ENCODE measurements at regions of chr20 and their contacts with region 1.

Region 1: GRCh38 chr20:33666293-33667244 is at the start of gene ACTL10:
- DNase-seq: peak; percentile 78
- H3K4me3 Mint-ChIP-seq: peak within 1 kb of the TSS; percentile 88
- H3K27ac Mint-ChIP-seq: peak within 1 kb of the TSS; percentile 86
- H3K4me1 Mint-ChIP-seq: peaks cover 43% of the 10 kb centered on the region
- H3K27me3 Mint-ChIP-seq: no peaks in the 10 kb centered on the region
- total RNA-seq, gene ACTL10: 3.7 and 4.2 TPM in 2 replicates

Region 2: GRCh38 chr20:33373735-33374605 is 292.6 kb before region 1 on chr20:
- intact Hi-C with region 1: loop called (anchors 10 kb)
- DNase-seq: no peak
- H3K4me3 Mint-ChIP-seq: no peak overlapping the region
- H3K27ac Mint-ChIP-seq: no peak overlapping the region
- H3K4me1 Mint-ChIP-seq: peaks cover 52% of the 10 kb centered on the region
- H3K27me3 Mint-ChIP-seq: no peaks in the 10 kb centered on the region

Region 3: GRCh38 chr20:33443512-33444239 is 222.9 kb before region 1 on chr20 and contains the start of gene SNTA1:
- intact Hi-C with region 1: loop called (anchors 1 kb)
- DNase-seq: peak; percentile 82
- H3K4me3 Mint-ChIP-seq: peak within 1 kb of the TSS; percentile 88
- H3K27ac Mint-ChIP-seq: peak within 1 kb of the TSS; percentile 76
- H3K4me1 Mint-ChIP-seq: peaks cover 10% of the 10 kb centered on the region
- H3K27me3 Mint-ChIP-seq: peaks cover 11% of the 10 kb centered on the region
- total RNA-seq, gene SNTA1: 0.76 and 0.91 TPM in 2 replicates

Region 4: DNA sequence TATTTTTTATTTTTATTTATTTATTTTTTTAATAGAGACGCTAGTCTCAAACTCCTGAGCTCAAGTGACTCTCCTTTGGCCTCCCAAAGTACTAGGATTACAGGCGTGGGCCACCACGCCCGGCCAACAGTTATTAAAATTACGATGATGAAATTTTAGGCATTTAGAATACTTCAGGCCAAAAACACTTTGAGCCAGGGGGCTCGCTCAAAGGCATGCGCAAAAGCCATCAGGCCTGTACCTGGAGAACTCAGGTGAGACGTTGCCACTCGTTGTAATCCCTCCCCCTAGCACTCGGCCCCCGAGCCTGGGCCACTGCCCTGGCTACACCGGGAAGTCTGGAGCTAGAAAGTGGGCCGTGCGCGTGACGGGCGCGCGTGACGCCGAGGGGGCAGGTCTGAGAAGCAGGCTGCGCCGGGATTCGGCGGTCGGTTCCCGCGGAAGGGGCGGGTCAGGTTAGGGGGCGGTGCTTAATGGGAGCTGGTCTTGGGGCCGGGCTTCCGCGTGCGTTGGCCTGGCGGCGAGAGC is 177.0 kb before region 1 on chr20:
- intact Hi-C with region 1: loop called (anchors 1 kb)
- DNase-seq: peak; percentile 99
- H3K4me3 Mint-ChIP-seq: peak overlapping the region; percentile 88
- H3K27ac Mint-ChIP-seq: peak overlapping the region; percentile 85
- H3K4me1 Mint-ChIP-seq: peaks cover 9% of the 10 kb centered on the region
- H3K27me3 Mint-ChIP-seq: no peaks in the 10 kb centered on the region

Region 5: GRCh38 chr20:33653218-33653899 is 13.2 kb before region 1 on chr20:
- intact Hi-C with region 1: loop called (anchors 1 kb)
- DNase-seq: no peak
- H3K4me3 Mint-ChIP-seq: no peak overlapping the region
- H3K27ac Mint-ChIP-seq: no peak overlapping the region
- H3K4me1 Mint-ChIP-seq: peaks cover 15% of the 10 kb centered on the region
- H3K27me3 Mint-ChIP-seq: no peaks in the 10 kb centered on the region

Region 6: DNA sequence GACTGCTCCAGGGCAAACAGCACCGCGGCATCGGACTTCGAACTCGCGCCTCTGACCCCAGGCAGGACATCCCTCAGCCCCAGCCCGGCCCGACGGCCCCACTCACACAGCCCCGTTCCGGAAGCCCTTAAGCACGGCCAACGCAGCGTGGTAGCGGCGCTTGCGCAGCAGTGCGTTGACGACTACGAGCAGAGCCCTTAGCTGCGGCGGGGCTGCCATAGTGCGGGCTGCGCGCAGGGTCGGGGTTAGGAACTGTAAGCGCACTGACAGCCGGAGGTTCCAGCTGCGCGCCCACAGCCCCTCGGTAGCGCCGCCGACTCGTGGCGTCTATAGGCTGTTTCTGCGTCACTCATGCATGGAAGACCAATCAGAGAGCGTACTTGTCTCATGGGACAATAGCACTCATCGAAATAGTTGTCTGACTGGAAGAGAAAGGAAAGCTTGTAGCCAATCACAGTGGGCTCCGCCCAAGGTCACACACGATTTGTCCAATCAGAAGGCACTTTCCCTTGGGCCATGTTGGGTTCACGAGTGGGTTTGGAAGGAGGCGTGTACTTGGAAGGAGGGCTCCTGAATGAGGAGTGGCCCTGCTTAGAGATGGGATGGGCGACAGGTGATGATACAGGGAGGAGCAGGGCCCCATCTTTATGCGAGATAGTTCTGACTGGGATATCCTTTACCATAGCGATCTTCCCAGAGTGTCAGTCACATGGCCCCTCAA is 53.6 kb after region 1 on chr20 and contains the start of gene PXMP4:
- intact Hi-C with region 1: loop called (anchors 1 kb)
- DNase-seq: peak; percentile 88
- H3K4me3 Mint-ChIP-seq: peak within 1 kb of the TSS; percentile 85
- H3K27ac Mint-ChIP-seq: peak within 1 kb of the TSS; percentile 93
- H3K4me1 Mint-ChIP-seq: peaks cover 30% of the 10 kb centered on the region
- H3K27me3 Mint-ChIP-seq: no peaks in the 10 kb centered on the region
- total RNA-seq, gene PXMP4: 7.3 and 7.9 TPM in 2 replicates

Region 7: GRCh38 chr20:33810885-33811777 is 144.6 kb after region 1 on chr20 and contains the start of gene CHMP4B:
- intact Hi-C with region 1: loop called (anchors 5 kb)
- DNase-seq: peak; percentile 99
- H3K4me3 Mint-ChIP-seq: peak within 1 kb of the TSS; percentile 94
- H3K27ac Mint-ChIP-seq: peak within 1 kb of the TSS; percentile 97
- H3K4me1 Mint-ChIP-seq: peaks cover 47% of the 10 kb centered on the region
- H3K27me3 Mint-ChIP-seq: no peaks in the 10 kb centered on the region
- total RNA-seq, gene CHMP4B: 94.5 and 96.4 TPM in 2 replicates

Region 8: GRCh38 chr20:33963751-33964150 is 297.2 kb after region 1 on chr20:
- intact Hi-C with region 1: no loop called
- DNase-seq: no peak
- H3K4me3 Mint-ChIP-seq: no peak overlapping the region
- H3K27ac Mint-ChIP-seq: no peak overlapping the region
- H3K4me1 Mint-ChIP-seq: no peaks in the 10 kb centered on the region
- H3K27me3 Mint-ChIP-seq: peaks cover 7% of the 10 kb centered on the region

Region 9: GRCh38 chr20:34143951-34144350 is 477.4 kb after region 1 on chr20:
- intact Hi-C with region 1: no loop called
- DNase-seq: no peak
- H3K4me3 Mint-ChIP-seq: no peak overlapping the region
- H3K27ac Mint-ChIP-seq: no peak overlapping the region
- H3K4me1 Mint-ChIP-seq: no peaks in the 10 kb centered on the region
- H3K27me3 Mint-ChIP-seq: peaks cover 6% of the 10 kb centered on the region

Measured in activated T-helper 1 cell treated with anti-CD3 and anti-CD28 coated beads, Interleukin-12 subunit alpha, Interleukin-12 subunit beta, Interleukin-2, Interleukin-4 antibody, amounts not matched to agents 30 ng/mL and 10 ng/mL and 1 ng/mL, durations not matched to agents 14 hours and 24 hours and 36 hours (primary cell).